ENCODE measurements at regions of chr20 and their contacts with region 1.

Region 1: GRCh38 chr20:3193806-3194616 is 10.5 kb downstream of the DDRGK1 start:
- DNase-seq: no peak
- ATAC-seq: no peak
- H3K4me3 ChIP-seq: no peak overlapping the region
- H3K27ac ChIP-seq: no peak overlapping the region
- H3K4me1 ChIP-seq: no peaks in the 10 kb centered on the region
- H3K27me3 ChIP-seq: no peaks in the 10 kb centered on the region
- CTCF ChIP-seq: no peak
- EP300 ChIP-seq: no peak
- POLR2A ChIP-seq: no peak
- RAD21 ChIP-seq: no peak

Region 2: GRCh38 chr20:3209257-3209945 is 15.4 kb after region 1 on chr20 and contains the start of gene ITPA:
- CTCF ChIA-PET with region 1: no interaction called
- POLR2A ChIA-PET with region 1: interaction called, 11 read pairs
- RAD21 ChIA-PET with region 1: no interaction called
- SMC1A ChIA-PET with region 1: no interaction called
- in situ Hi-C with region 1: no loop called
- intact Hi-C with region 1: no loop called
- DNase-seq: no peak
- ATAC-seq: peak; percentile 73
- H3K4me3 ChIP-seq: peak within 1 kb of the TSS; percentile 100
- H3K27ac ChIP-seq: peak within 1 kb of the TSS; percentile 94
- H3K4me1 ChIP-seq: peaks cover 7% of the 10 kb centered on the region
- H3K27me3 ChIP-seq: no peaks in the 10 kb centered on the region
- CTCF ChIP-seq: no peak
- EP300 ChIP-seq: no peak
- POLR2A ChIP-seq: peak; percentile 86
- RAD21 ChIP-seq: no peak
- polyA plus RNA-seq, gene ITPA: 5.5 to 30.2 TPM